ENCODE measurements at regions of chr6 and their contacts with region 1.

Region 1: DNA sequence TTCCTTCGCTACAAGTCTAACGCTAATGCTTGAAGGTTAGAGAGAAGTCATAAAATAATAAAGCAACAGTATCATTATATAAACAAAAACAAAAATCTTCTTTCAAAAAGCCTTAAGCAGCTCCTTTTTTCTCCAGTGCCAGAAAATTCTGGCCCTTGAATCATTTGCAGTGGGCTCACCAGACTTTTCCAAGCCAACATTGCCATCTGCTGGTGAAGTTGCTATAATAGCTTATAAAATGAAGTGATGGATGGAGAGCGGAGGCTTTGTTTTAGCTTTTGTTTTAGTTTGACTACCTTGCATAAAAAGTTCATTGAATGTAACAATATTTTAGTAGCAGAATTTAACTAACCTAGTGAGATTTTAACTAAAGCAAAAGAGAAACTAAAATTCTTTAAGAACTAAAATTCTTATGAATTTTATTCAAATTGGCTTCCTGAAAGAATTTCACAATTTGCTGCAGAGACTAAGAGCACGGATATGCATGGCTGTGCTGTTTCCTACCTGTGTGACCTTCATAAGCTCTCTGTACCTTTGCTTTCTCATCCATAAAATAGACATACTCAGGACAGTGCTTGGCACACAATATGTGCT is 44.8 kb upstream of the SLC2A12 start:
- DNase-seq: peak; percentile 80
- H3K4me3 Mint-ChIP-seq: no peak overlapping the region
- H3K27ac Mint-ChIP-seq: no peak overlapping the region
- H3K4me1 Mint-ChIP-seq: no peaks in the 10 kb centered on the region
- H3K27me3 Mint-ChIP-seq: peaks cover 7% of the 10 kb centered on the region

Region 2: GRCh38 chr6:133568970-133569889 is 528.0 kb before region 1 on chr6:
- CTCF ChIA-PET with region 1: interaction called, 3 read pairs
- intact Hi-C with region 1: loop called (anchors 2 kb)
- DNase-seq: peak; percentile 51
- H3K4me3 Mint-ChIP-seq: no peak overlapping the region
- H3K27ac Mint-ChIP-seq: no peak overlapping the region
- H3K4me1 Mint-ChIP-seq: peaks cover 8% of the 10 kb centered on the region
- H3K27me3 Mint-ChIP-seq: peaks cover 36% of the 10 kb centered on the region

Region 3: DNA sequence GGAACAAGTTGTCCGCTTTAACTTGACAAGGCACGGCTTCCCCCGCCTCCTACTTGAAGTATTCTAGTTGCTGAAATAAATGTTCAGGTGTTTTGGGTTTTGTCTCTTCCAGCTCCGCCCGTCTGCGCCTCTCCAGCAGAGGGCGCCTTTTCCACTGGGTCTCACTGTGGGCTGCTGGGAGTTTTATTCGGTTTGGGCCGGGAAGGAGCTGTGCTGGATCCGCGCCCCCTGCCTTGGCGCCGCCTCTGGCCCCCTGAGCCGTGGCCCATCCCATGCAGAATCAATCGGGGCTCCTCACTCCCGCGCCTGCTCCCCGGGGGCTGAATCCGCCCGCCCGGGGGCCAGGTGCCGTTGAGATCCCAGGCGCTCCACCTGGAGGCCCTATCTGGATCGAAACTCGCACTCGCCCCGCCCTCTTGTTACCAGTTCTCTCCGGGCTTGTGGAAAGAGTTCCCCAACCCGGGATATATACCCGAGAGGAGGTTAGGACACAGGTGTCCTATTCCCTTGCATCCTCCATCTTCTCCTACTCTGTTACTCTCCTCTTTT is 259.3 kb before region 1 on chr6:
- CTCF ChIA-PET with region 1: interaction called, 6 read pairs
- intact Hi-C with region 1: loop called (anchors 2 kb)
- DNase-seq: peak; percentile 75
- H3K4me3 Mint-ChIP-seq: peak overlapping the region; percentile 55
- H3K27ac Mint-ChIP-seq: no peak overlapping the region
- H3K4me1 Mint-ChIP-seq: peaks cover 5% of the 10 kb centered on the region
- H3K27me3 Mint-ChIP-seq: peaks cover 20% of the 10 kb centered on the region

Region 4: GRCh38 chr6:133973109-133973971 is 123.9 kb before region 1 on chr6:
- CTCF ChIA-PET with region 1: interaction called, 26 read pairs
- intact Hi-C with region 1: loop called (anchors 1 kb)
- DNase-seq: no peak
- H3K4me3 Mint-ChIP-seq: no peak overlapping the region
- H3K27ac Mint-ChIP-seq: no peak overlapping the region
- H3K4me1 Mint-ChIP-seq: peaks cover 32% of the 10 kb centered on the region
- H3K27me3 Mint-ChIP-seq: no peaks in the 10 kb centered on the region

Region 5: DNA sequence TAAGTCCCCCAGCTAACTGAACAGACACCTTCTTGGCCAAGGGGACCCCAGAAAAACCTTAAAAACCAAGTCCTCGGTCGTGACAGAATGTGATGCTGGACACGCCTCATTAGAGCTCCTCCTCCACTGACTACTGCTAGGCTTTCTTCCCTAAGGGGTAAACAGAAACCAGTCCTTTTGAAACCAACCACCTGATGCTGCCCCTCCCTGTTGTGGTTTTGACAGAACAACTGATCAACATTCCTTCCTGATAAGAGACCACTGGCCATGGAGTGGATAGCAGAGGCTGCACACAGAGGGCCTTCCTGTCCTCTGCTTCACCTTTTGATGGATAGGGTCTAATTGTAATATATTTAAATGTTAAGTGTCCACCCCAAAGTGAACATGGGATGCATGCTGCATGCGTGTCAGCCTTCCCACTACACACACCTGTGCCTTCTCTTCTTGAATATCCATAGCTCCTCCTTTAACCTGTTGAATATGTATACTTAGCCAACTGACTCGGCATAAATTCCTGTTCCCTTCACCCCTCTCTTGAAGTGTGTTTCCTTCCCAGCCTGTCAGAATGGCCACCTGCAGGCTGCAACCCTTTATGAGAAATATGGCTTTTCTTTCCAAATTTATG is 16.9 kb before region 1 on chr6:
- CTCF ChIA-PET with region 1: interaction called, 17 read pairs
- intact Hi-C with region 1: no loop called
- DNase-seq: no peak
- H3K4me3 Mint-ChIP-seq: no peak overlapping the region
- H3K27ac Mint-ChIP-seq: no peak overlapping the region
- H3K4me1 Mint-ChIP-seq: peaks cover 9% of the 10 kb centered on the region
- H3K27me3 Mint-ChIP-seq: no peaks in the 10 kb centered on the region

Measured in activated naive CD4-positive, alpha-beta T cell treated with anti-CD3 and anti-CD28 coated beads for 36 hours (primary cell).